ENCODE measurements at regions of chr9 and their contacts with region 1.

Region 1: GRCh38 chr9:34899535-34900158 is 58.4 kb upstream of the PHF24 start:
- DNase-seq: peak; percentile 49
- ATAC-seq: peak; percentile 100
- H3K4me3 ChIP-seq: no peak overlapping the region
- H3K27ac ChIP-seq: no peak overlapping the region
- H3K4me1 ChIP-seq: no peaks in the 10 kb centered on the region
- H3K27me3 ChIP-seq: peaks cover 47% of the 10 kb centered on the region
- CTCF ChIP-seq: peak; percentile 83 to 85 (median 84)
- POLR2A ChIP-seq: no peak
- RAD21 ChIP-seq: peak; percentile 94

Region 2: DNA sequence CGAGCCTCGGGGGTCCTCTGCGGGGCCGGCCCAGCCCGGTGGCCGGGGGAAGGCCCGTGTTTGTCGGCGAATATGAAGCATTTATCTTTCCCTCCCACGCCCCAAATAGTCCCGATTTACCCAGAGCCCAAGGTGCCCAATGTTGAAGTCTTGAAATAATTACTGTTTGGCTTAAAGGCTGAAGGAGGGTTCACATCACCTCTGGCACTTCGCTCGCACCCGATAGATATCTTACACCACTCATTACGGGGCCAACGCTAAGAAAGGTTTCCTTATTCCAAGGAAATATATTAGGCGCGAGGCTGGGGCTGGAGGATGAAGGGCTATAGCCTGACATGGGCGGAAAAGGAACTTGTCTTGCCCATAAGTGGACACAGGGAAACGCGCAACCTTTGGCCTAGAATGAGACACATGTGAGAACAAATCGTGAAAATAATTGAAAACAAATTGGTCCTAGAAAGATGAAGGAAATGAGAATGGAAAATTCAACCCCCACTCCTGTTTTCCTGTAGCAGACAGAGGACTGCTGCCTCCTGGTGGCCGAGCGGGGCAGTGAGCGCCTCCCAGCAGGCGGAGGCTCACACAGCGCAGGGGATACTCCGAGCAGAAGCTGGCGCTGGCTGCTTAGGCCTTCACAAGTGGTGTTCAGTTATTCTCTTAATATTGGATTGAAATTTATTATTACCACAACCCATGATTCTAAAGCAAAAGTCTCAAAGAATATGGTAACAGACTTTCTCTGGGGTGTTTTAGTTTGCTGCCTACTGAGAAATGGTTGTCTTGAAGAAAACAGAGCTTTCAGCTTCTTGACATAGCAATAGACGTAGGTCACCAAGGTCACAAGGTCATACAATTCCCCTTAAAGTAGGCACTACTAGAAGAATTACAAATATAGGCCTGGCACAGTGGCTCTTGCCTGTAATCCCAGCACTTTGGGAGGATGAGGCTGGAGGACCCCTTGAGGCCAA is 197.6 kb before region 1 on chr9:
- CTCF ChIA-PET with region 1: interaction called, 13 read pairs
- POLR2A ChIA-PET with region 1: no interaction called
- RAD21 ChIA-PET with region 1: no interaction called
- intact Hi-C with region 1: no loop called
- DNase-seq: peak; percentile 48
- ATAC-seq: peak; percentile 83
- H3K4me3 ChIP-seq: peak overlapping the region; percentile 41 to 57
- H3K27ac ChIP-seq: no peak overlapping the region
- H3K4me1 ChIP-seq: peaks cover 3 to 14% of the 10 kb centered on the region in 2 experiments; a peak in 2 of 4 replicates
- H3K27me3 ChIP-seq: no peaks in the 10 kb centered on the region
- CTCF ChIP-seq: peak; percentile 96 to 99 (median 97)
- POLR2A ChIP-seq: no peak
- RAD21 ChIP-seq: peak; percentile 77

Region 3: DNA sequence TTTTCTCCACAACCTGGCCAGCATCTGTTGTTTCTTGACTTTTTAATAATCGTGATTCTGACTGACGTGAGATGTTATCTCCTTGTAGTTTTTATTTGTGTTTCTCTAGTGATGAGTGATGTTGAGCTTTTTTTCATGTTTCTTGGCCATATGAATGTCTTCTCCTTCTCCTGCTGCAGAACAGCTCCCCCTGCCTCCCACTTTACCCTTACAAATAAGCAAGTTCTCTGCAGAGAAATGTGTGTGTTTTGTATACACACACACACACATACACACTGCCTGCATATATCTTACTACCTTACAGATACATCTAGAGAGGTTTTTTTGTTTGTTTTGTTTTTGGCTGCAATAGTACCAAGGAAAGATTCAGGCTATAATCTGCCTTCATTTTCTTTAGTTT is 30.3 kb before region 1 on chr9:
- CTCF ChIA-PET with region 1: no interaction called
- POLR2A ChIA-PET with region 1: no interaction called
- RAD21 ChIA-PET with region 1: no interaction called
- intact Hi-C with region 1: no loop called
- DNase-seq: peak; percentile 7
- ATAC-seq: peak; percentile 52; the same call in 1 of the 2 replicates
- H3K4me3 ChIP-seq: no peak overlapping the region
- H3K27ac ChIP-seq: no peak overlapping the region
- H3K4me1 ChIP-seq: no peaks in the 10 kb centered on the region
- H3K27me3 ChIP-seq: peaks cover 14% of the 10 kb centered on the region; the same call in 1 of the 2 replicates
- CTCF ChIP-seq: peak; percentile 51 to 62 (median 55)
- POLR2A ChIP-seq: no peak
- RAD21 ChIP-seq: peak; percentile 61

Region 4: GRCh38 chr9:34929506-34930102 is 30.0 kb after region 1 on chr9:
- CTCF ChIA-PET with region 1: interaction called, 23 read pairs
- POLR2A ChIA-PET with region 1: no interaction called
- RAD21 ChIA-PET with region 1: no interaction called
- intact Hi-C with region 1: no loop called
- DNase-seq: peak; percentile 23
- ATAC-seq: peak; percentile 98
- H3K4me3 ChIP-seq: no peak overlapping the region
- H3K27ac ChIP-seq: no peak overlapping the region
- H3K4me1 ChIP-seq: no peaks in the 10 kb centered on the region
- H3K27me3 ChIP-seq: peaks cover 8% of the 10 kb centered on the region; the same call in 1 of the 2 replicates
- CTCF ChIP-seq: peak in 2 of 3 experiments; percentile 86 to 90; a peak in 4 of 6 replicates
- POLR2A ChIP-seq: no peak
- RAD21 ChIP-seq: 0 out of 2 replicates have a peak, but pooled peaks have one; percentile 17

Region 5: DNA sequence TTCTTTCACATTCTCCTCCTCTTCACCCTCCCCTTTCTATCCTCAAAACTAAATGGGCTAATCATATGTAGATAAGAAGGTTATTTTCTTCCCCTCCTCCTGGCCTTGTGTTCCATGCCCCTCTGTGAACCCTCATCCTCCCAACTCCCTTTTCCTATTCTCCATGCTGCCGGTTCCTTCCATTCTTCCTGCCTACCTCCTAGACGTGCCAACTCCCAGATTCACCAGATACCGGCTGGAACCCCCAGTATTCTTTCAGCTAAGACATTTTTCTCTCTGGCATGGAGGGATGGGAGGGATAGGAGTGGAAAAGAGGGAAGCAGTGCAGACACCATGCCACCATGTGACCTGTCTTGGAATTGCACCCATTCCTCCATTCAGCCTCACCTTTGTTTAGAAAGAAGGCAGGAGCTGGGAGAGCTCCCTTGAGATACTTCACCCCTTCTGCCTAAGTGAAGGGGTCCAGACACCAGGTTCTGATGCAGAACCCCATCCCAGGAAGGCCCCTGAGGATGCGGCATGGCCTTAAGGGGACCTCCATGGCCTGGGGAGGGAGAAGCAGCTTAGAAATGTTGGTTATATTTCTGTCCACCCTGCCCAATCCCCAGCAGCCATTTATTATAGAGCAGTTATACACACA is 94.7 kb after region 1 on chr9:
- CTCF ChIA-PET with region 1: interaction called, 83 read pairs
- POLR2A ChIA-PET with region 1: interaction called, 5 read pairs
- RAD21 ChIA-PET with region 1: interaction called, 11 to 14 read pairs
- intact Hi-C with region 1: no loop called
- DNase-seq: peak; percentile 29
- ATAC-seq: peak; percentile 48
- H3K4me3 ChIP-seq: no peak overlapping the region
- H3K27ac ChIP-seq: no peak overlapping the region
- H3K4me1 ChIP-seq: peaks cover 21 to 52% of the 10 kb centered on the region in 2 experiments
- H3K27me3 ChIP-seq: no peaks in the 10 kb centered on the region
- CTCF ChIP-seq: peak in 2 of 3 experiments; percentile 76 to 81; a peak in 4 of 6 replicates
- POLR2A ChIP-seq: no peak
- RAD21 ChIP-seq: no peak

Region 6: GRCh38 chr9:35071814-35072460 is 172.3 kb after region 1 on chr9:
- CTCF ChIA-PET with region 1: interaction called, 12 read pairs
- POLR2A ChIA-PET with region 1: interaction called, 3 read pairs
- RAD21 ChIA-PET with region 1: no interaction called
- intact Hi-C with region 1: no loop called
- DNase-seq: peak; percentile 62
- ATAC-seq: peak; percentile 75
- H3K4me3 ChIP-seq: peak overlapping the region; percentile 92 to 95
- H3K27ac ChIP-seq: peak overlapping the region; percentile 100
- H3K4me1 ChIP-seq: peaks cover 11 to 24% of the 10 kb centered on the region in 2 experiments
- H3K27me3 ChIP-seq: no peaks in the 10 kb centered on the region
- CTCF ChIP-seq: peak in 1 of 3 experiments; percentile 29; a peak in 1 of 6 replicates
- POLR2A ChIP-seq: no peak
- RAD21 ChIP-seq: no peak

Region 7: DNA sequence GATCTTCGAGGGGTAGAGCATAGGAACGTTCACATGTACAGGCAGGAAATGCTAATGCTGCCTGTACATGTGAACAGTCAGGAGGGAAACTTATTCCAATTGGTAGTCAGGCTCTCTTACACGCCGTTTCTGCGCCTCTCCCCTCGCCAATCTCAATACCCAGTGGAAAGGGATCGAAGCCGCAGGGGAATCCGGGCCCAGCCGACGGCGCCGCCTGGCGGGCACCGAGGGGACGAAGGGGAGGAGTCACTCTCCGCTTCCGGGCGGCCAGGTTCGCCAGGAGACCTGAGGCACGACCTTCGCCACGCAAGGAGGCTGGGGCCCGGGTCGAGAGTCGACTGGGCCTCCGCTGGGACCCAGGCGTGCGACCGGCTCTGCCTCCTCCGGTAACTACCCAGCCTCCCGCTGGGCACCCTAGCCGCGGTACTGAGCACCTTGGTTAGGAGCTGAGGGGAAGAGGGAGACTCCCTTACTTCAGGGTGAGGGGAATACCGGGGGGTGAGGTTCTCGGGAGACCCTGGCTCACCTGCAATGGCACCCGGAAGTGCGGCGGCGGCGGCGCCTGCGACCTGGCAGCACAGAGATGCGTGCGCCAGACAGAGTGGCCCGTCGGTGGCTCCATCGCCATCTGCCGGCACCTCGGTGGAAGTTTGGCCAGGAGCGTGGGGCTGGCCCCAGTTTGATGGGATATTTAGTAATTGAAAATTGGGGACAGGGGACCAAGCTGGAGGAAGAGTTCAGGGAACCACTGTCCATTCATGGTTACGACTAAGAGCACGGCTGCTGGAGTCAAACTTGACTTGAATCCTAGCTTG is 196.6 kb after region 1 on chr9 and contains the start of gene PIGO:
- CTCF ChIA-PET with region 1: interaction called, 20 read pairs
- POLR2A ChIA-PET with region 1: no interaction called
- RAD21 ChIA-PET with region 1: no interaction called
- intact Hi-C with region 1: loop called (anchors 1 kb)
- DNase-seq: peak; percentile 81
- ATAC-seq: peak; percentile 90
- H3K4me3 ChIP-seq: peak within 1 kb of the TSS; percentile 57 to 92
- H3K27ac ChIP-seq: peak within 1 kb of the TSS; percentile 92
- H3K4me1 ChIP-seq: peaks cover 5 to 19% of the 10 kb centered on the region in 2 experiments; a peak in 3 of 4 replicates
- H3K27me3 ChIP-seq: no peaks in the 10 kb centered on the region
- CTCF ChIP-seq: peak in 2 of 3 experiments; percentile 59 to 78; a peak in 4 of 6 replicates
- POLR2A ChIP-seq: no peak
- RAD21 ChIP-seq: no peak
- total RNA-seq, gene PIGO: 24.0 TPM

Region 8: DNA sequence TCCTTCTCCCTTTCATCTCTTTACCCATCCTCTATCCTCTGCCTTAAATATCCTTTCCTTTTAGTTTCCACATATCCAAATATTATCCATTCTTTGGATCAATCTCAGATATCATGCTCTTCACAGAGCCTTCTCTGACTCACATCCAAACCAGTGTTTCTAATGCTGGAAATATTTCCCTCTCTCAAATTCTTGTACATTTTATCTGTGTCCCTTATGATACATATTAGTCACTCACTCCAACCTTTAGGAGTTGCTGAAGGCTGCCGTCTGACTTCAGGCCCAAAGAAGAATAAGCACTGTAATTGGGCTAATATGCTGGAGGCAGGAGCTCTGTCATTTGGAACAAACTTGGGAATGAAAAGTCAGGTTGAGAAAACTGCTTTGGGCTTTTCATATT is 433.9 kb after region 1 on chr9:
- CTCF ChIA-PET with region 1: no interaction called
- POLR2A ChIA-PET with region 1: no interaction called
- RAD21 ChIA-PET with region 1: no interaction called
- intact Hi-C with region 1: no loop called
- DNase-seq: no peak
- ATAC-seq: no peak
- H3K4me3 ChIP-seq: no peak overlapping the region
- H3K27ac ChIP-seq: no peak overlapping the region
- H3K4me1 ChIP-seq: no peaks in the 10 kb centered on the region
- H3K27me3 ChIP-seq: no peaks in the 10 kb centered on the region
- CTCF ChIP-seq: no peak
- POLR2A ChIP-seq: no peak
- RAD21 ChIP-seq: no peak

Region 9: DNA sequence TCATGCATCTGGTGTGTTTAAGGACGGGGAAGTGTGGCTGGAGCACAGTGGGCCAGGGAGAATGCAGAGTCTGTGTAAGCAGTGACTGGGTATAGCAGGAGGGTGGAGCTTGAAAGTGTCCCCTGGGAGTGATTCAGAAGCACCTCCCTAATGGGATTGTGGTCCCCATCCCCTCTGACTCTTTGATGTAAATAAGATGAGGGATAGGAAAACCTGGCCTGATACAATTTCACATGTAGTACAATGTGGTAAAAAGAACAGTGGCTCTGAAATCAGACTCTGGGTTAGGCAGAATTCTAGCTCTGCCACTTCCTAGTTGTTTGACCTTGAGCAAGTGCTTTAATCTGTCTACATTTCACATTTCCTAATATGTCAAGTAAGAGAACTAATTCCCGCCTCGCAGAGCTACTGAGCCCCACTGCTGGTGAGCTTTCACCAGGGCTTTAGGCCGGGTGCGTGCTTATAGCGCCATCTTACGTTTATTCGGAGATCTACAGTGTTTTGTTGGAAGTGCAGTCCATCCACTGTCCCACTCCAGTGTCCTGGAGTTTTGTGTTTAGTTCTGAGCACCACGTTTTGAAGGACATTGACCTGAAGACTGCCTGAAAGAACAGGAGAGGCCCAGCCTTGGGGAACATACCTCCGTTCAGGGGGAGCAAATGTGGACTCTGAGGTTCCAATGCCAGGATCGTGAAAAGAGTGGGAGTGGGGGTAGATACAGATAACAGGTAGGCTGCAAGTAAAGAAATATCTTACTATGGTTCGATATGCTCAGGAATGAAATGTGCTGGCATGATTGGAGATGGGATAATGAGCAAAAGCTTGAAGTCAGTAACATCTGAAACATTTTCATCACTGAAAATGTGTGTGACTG is 654.3 kb after region 1 on chr9:
- CTCF ChIA-PET with region 1: interaction called, 12 read pairs
- POLR2A ChIA-PET with region 1: no interaction called
- RAD21 ChIA-PET with region 1: no interaction called
- intact Hi-C with region 1: loop called (anchors 10 kb)
- DNase-seq: peak; percentile 37
- ATAC-seq: peak; percentile 97
- H3K4me3 ChIP-seq: no peak overlapping the region
- H3K27ac ChIP-seq: no peak overlapping the region
- H3K4me1 ChIP-seq: no peaks in the 10 kb centered on the region; a peak in 1 of 4 replicates
- H3K27me3 ChIP-seq: no peaks in the 10 kb centered on the region
- CTCF ChIP-seq: peak; percentile 74 to 96 (median 95)
- POLR2A ChIP-seq: no peak
- RAD21 ChIP-seq: peak; percentile 99

Measured in HCT116 (cell line).